Calu3 (cell line): ENCODE measurements at regions of chr7 and their contacts with region 1.

Region 1: DNA sequence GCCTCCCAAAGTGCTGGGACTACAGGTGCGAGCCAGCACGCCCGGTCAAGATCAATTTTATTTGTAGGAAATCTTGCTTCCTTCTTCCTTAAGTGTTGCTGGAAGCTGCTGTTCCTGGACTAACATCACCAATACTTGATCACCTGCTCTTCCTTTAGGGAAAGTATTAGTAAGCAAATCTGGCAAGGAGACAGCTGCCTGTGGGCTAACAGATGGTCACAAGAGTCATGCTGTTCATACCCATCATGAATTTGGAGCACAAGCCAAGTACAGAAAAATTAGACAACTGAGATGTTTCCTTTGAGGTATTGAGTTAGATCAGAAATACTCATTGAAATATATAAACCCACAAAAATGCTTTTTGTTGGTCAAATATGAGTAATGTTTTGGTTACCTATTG is 27.9 kb downstream of the BAIAP2L1 start:
- DNase-seq: no peak
- H3K4me3 Mint-ChIP-seq: no peak overlapping the region
- H3K27ac Mint-ChIP-seq: peak overlapping the region; percentile 74
- H3K4me1 Mint-ChIP-seq: peaks cover 8% of the 10 kb centered on the region
- H3K27me3 Mint-ChIP-seq: no peaks in the 10 kb centered on the region
- CTCF ChIP-seq: no peak

Region 2: DNA sequence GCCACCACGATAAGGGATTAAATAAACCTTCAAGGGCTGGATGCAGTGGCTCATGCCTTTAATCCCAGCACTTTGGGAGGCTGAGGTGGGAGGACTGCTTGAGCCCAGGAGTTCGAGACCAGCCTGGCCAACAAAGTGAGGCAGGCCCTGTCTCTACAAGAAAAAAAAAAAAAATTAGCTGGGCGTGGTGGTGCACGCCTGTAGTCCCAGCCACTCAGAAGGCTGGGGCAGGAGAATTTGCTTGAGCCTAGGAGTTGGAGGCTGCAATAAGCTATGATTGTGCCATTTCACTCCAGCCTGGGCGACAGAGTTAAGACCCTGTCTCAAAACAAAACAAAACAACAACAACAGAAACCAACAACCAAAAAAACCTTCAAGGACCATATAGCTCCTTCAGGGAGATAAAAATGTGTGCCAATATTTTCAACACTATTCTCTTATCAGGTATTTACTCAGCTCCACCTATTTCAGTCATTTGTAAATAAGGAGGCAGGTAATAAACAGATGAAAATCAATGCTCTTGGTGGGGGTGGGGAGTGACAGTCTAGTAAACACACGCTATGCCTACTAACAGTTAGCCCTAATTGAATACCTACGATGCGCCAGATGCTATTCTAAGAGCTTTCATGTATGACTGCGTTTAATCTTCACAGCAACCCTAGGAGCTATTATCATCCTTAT is 14.7 kb after region 1 on chr7:
- CTCF ChIA-PET with region 1: interaction called, 17 read pairs
- intact Hi-C with region 1: no loop called
- DNase-seq: no peak
- H3K4me3 Mint-ChIP-seq: no peak overlapping the region
- H3K27ac Mint-ChIP-seq: no peak overlapping the region
- H3K4me1 Mint-ChIP-seq: no peaks in the 10 kb centered on the region
- H3K27me3 Mint-ChIP-seq: no peaks in the 10 kb centered on the region
- CTCF ChIP-seq: no peak